CD8-positive, alpha-beta T cell (primary cell): ENCODE measurements at regions of chr12 and their contacts with region 1.

Region 1: GRCh38 chr12:123905319-123905925 is 67.2 kb downstream of the CCDC92 start:
- DNase-seq: peak; percentile 34 to 82 (median 66)
- ATAC-seq: peak; percentile 82
- H3K4me3 ChIP-seq: no peak overlapping the region
- H3K4me3 Mint-ChIP-seq: no peak overlapping the region
- H3K27ac ChIP-seq: no peak overlapping the region
- H3K27ac Mint-ChIP-seq: no peak overlapping the region
- H3K4me1 ChIP-seq: peaks cover 4% of the 10 kb centered on the region
- H3K4me1 Mint-ChIP-seq: peaks cover 11% of the 10 kb centered on the region
- H3K27me3 ChIP-seq: no peaks in the 10 kb centered on the region
- H3K27me3 Mint-ChIP-seq: peaks cover 4% of the 10 kb centered on the region
- CTCF ChIP-seq: peak; percentile 75

Region 2: GRCh38 chr12:123468562-123469185 is 436.7 kb before region 1 on chr12:
- CTCF ChIA-PET with region 1: no interaction called
- POLR2A ChIA-PET with region 1: no interaction called
- intact Hi-C with region 1: no loop called
- DNase-seq: peak in 2 of 9 experiments; percentile 41 to 57
- ATAC-seq: peak; percentile 49
- H3K4me3 ChIP-seq: no peak overlapping the region
- H3K4me3 Mint-ChIP-seq: no peak overlapping the region
- H3K27ac ChIP-seq: no peak overlapping the region
- H3K27ac Mint-ChIP-seq: peak overlapping the region; percentile 37
- H3K4me1 ChIP-seq: no peaks in the 10 kb centered on the region
- H3K4me1 Mint-ChIP-seq: peaks cover 18% of the 10 kb centered on the region
- H3K27me3 ChIP-seq: no peaks in the 10 kb centered on the region
- H3K27me3 Mint-ChIP-seq: no peaks in the 10 kb centered on the region
- CTCF ChIP-seq: no peak

Region 3: DNA sequence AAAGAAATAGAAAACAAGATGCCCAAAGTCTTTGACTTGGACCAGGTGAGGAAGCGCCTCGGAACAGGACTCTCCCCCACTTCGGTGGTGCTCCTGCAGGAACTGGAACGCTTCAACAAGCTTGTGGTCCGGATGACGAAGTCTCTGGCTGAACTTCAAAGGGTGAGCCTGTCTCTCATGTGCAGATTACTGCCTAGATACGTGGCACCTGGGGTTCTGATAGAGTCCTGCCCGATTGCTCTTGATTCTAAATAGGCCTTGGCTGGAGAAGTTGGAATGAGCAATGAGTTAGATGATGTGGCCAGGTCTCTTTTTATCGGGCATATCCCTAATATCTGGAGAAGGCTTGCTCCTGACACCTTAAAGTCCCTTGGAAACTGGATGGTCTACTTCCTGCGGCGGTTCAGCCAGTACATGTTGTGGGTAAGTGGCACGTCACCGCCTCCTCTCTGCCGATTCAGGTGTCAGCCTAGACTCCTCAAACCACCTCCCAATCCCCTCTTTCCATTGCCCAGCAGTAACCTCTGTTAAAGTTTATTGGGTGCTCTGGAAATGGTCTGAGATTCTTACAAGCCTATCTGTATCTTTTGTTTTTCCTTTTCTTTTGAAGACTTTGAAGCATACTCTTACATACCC is 26.4 kb after region 1 on chr12:
- CTCF ChIA-PET with region 1: interaction called, 9 read pairs
- POLR2A ChIA-PET with region 1: interaction called, 3 read pairs
- intact Hi-C with region 1: loop called (anchors 2 kb)
- DNase-seq: peak in 8 of 9 experiments; percentile 20 to 80 (median 60)
- ATAC-seq: peak; percentile 77
- H3K4me3 ChIP-seq: peak overlapping the region in 1 of 2 experiments; percentile 12
- H3K4me3 Mint-ChIP-seq: peak overlapping the region; percentile 59
- H3K27ac ChIP-seq: no peak overlapping the region
- H3K27ac Mint-ChIP-seq: peak overlapping the region; percentile 9
- H3K4me1 ChIP-seq: peaks cover 29% of the 10 kb centered on the region
- H3K4me1 Mint-ChIP-seq: peaks cover 34% of the 10 kb centered on the region
- H3K27me3 ChIP-seq: no peaks in the 10 kb centered on the region
- H3K27me3 Mint-ChIP-seq: no peaks in the 10 kb centered on the region
- CTCF ChIP-seq: no peak

Region 4: GRCh38 chr12:123961585-123962345 is 56.3 kb after region 1 on chr12:
- CTCF ChIA-PET with region 1: interaction called, 16 read pairs
- POLR2A ChIA-PET with region 1: no interaction called
- intact Hi-C with region 1: no loop called
- DNase-seq: no peak
- ATAC-seq: no peak
- H3K4me3 ChIP-seq: no peak overlapping the region
- H3K4me3 Mint-ChIP-seq: no peak overlapping the region
- H3K27ac ChIP-seq: no peak overlapping the region
- H3K27ac Mint-ChIP-seq: no peak overlapping the region
- H3K4me1 ChIP-seq: no peaks in the 10 kb centered on the region
- H3K4me1 Mint-ChIP-seq: peaks cover 3% of the 10 kb centered on the region
- H3K27me3 ChIP-seq: no peaks in the 10 kb centered on the region
- H3K27me3 Mint-ChIP-seq: no peaks in the 10 kb centered on the region
- CTCF ChIP-seq: no peak

Region 5: GRCh38 chr12:123983822-123984485 is 78.5 kb after region 1 on chr12:
- CTCF ChIA-PET with region 1: interaction called, 160 read pairs
- POLR2A ChIA-PET with region 1: interaction called, 5 read pairs
- intact Hi-C with region 1: loop called (anchors 1 kb)
- DNase-seq: peak in 8 of 9 experiments; percentile 23 to 80 (median 54)
- ATAC-seq: peak; percentile 75
- H3K4me3 ChIP-seq: no peak overlapping the region
- H3K4me3 Mint-ChIP-seq: no peak overlapping the region
- H3K27ac ChIP-seq: no peak overlapping the region
- H3K27ac Mint-ChIP-seq: no peak overlapping the region
- H3K4me1 ChIP-seq: no peaks in the 10 kb centered on the region
- H3K4me1 Mint-ChIP-seq: peaks cover 17% of the 10 kb centered on the region
- H3K27me3 ChIP-seq: no peaks in the 10 kb centered on the region
- H3K27me3 Mint-ChIP-seq: no peaks in the 10 kb centered on the region
- CTCF ChIP-seq: peak; percentile 73

Region 6: DNA sequence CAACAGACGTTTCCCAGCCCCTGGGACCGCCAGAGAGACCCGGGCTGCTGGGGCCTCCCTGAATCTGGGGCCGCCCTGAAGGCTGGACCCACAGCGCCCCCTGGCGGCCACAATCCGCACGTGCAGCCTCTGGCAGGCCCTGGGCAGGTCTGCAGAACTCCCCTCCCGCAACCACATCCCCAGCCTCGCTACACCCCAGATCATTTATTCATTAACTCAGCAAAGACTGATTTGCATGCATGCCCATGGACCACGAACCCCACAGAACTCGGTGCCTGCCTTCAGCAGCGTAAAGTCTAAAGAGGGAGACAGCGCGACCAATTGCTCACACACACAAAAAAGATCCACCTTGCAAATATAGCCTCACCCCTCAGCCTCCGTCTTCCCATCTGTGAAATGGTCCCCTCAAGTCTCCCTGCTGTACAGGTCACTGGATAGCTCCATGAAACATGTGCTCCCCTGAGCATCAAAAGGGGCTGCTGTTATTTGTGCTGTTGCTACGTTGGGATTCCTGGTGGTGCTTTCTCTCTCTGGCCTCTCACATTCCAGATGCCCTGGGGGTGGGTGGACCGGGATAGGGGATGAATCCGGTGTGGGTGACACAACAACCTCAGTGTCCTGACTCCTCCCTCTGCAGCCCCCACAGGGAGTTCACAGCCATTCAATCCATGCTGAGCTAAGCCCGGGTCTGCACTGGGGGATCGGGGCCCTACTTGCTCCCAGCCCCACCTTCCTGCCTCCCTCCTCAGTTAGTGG is 861.8 kb after region 1 on chr12:
- CTCF ChIA-PET with region 1: no interaction called
- POLR2A ChIA-PET with region 1: no interaction called
- intact Hi-C with region 1: loop called in 1 of 2 experiments (anchors 10 kb)
- DNase-seq: peak; percentile 72 to 94 (median 83)
- ATAC-seq: peak; percentile 89
- H3K4me3 ChIP-seq: no peak overlapping the region
- H3K4me3 Mint-ChIP-seq: no peak overlapping the region
- H3K27ac ChIP-seq: no peak overlapping the region
- H3K27ac Mint-ChIP-seq: peak overlapping the region; percentile 24
- H3K4me1 ChIP-seq: peaks cover 8% of the 10 kb centered on the region
- H3K4me1 Mint-ChIP-seq: peaks cover 23% of the 10 kb centered on the region
- H3K27me3 ChIP-seq: peaks cover 1 to 3% of the 10 kb centered on the region in 2 experiments
- H3K27me3 Mint-ChIP-seq: peaks cover 4% of the 10 kb centered on the region
- CTCF ChIP-seq: peak; percentile 99